ENCODE measurements at regions of chr4 and their contacts with region 1.

Region 1: DNA sequence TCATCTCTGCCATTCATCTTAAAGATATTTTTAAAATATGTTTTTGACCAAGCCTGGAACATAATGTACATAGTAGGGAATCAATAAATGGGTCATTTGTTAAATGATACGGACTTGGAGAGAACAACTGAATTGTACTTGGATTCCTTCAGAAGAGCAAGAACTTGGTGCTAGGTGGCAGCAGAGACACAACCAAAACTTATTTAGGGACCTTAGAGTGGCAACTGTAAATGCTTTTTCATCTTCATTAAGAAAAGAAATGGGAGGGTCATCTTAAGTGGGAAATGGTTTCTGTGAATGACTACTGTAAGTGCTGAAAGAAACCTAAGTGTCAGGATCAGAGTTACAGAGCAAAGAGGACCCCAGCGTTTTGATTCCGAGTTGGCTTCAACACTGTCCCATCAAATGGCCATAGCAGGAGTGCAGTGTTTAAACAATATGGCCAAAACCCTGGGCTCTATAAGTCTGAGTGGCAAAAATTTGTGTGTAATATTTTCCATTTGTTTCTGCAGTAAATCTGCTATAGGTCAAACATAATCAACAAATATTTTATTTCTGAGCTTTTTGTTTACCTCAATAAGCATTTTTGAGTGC is 213.6 kb downstream of the PALLD start:
- DNase-seq: peak; percentile 18 to 58 (median 28)
- ATAC-seq: no peak
- H3K4me3 ChIP-seq: no peak overlapping the region
- H3K27ac ChIP-seq: no peak overlapping the region
- H3K4me1 ChIP-seq: peaks cover 5% of the 10 kb centered on the region
- H3K27me3 ChIP-seq: no peaks in the 10 kb centered on the region
- CTCF ChIP-seq: peak; percentile 23 to 65 (median 51)
- POLR2A ChIP-seq: no peak

Region 2: DNA sequence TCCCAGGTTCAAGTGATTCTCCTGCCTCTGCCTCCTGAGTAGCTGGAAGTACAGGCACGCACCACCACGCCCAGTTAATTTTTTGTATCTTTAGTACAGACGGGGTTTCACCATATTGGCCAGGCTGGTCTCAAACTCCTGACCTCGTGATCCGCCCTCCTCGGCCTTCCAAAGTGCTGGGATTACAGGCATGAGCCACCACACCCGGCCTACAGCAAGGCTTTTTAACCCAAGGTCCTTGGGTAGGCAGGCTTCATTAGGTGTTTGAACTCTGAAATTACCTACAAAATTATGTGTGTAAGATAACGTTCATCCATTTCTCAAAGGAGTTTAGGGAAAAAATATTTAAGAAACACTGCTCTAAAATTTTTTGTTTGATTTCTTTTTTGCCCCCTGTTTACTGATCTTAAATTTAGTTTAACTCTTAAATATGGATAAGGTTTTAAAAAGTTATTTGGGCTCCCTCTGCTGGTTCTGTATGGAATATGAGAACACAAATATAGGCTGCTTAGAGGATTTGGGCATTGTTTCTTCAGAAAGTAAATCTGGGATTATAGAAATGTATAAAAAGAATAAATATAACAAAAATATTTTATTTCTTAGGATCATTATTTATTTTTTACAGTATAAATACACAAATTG is 206.8 kb after region 1 on chr4:
- intact Hi-C with region 1: loop called (anchors 10 kb)
- DNase-seq: no peak
- ATAC-seq: no peak
- H3K4me3 ChIP-seq: no peak overlapping the region
- H3K27ac ChIP-seq: no peak overlapping the region
- H3K4me1 ChIP-seq: no peaks in the 10 kb centered on the region
- H3K27me3 ChIP-seq: no peaks in the 10 kb centered on the region
- CTCF ChIP-seq: peak; percentile 14 to 63 (median 57)
- POLR2A ChIP-seq: no peak